Activated CD4-positive, alpha-beta T cell treated with anti-CD3 and anti-CD28 coated beads for 36 hours (primary cell): ENCODE measurements at regions of chr7 and their contacts with region 1.

Region 1: DNA sequence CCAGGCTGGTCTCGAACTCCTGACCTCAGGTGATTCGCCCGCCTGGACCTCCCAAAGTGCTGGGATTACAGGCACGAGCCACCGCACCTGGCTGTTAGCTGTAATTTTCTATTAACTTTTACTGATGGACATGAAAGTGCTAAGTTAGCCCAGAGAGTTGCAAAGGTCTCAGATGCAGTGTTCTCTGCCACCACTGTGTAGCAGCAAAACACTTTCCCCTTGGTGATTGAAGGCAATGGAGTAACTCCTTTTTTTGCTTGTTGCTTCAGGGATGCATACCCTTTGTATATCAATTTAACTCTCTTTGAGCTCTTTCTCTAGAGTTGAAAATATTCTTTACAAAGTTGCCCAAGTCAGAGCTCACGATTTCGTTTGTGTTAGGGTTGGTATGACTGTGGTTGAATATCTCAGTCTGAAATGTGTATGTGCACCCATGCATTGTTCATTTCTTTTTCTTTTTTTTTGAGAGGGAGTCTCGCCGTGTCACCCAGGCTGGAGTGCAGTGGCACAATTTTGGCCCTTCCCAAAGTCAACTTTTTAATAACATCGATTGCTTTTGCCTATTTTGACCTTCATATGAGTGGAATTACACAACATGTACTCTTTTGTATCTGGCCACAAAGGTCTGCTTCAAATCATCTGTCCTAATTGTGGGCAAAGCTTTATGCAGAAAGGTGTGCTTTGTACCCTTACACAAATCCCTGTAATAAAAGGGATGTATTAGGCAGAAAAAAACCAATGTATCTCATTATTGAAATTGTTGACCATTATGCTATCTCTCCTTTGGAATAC is 52.6 kb downstream of the GTF2I start:
- DNase-seq: no peak
- ATAC-seq: no peak
- H3K4me3 Mint-ChIP-seq: no peak overlapping the region
- H3K27ac Mint-ChIP-seq: no peak overlapping the region
- H3K4me1 Mint-ChIP-seq: peaks cover 2% of the 10 kb centered on the region
- H3K27me3 Mint-ChIP-seq: no peaks in the 10 kb centered on the region

Region 2: DNA sequence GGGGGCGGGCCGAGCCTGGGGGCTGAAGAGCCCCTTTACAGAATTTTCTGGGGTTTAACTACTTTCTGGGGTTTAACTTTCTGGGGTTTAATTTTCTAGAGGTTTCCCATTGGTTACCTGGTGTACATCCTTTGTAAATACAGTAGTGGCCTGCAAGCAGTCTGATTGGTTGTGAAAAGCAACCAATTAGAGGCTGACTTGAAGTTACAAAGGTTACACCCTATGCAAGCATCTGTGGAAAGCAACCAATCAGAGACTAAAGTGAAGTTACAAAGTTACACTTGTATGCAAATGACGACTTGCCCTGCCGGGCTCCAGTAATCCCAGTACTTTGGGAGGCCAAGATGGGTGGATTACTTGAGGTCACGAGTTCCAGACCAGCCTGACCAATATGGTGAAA is 25.2 kb before region 1 on chr7:
- CTCF ChIA-PET with region 1: no interaction called
- POLR2A ChIA-PET with region 1: no interaction called
- intact Hi-C with region 1: loop called in 1 of 2 experiments (anchors 2 kb)
- DNase-seq: no peak
- ATAC-seq: no peak
- H3K4me3 Mint-ChIP-seq: no peak overlapping the region
- H3K27ac Mint-ChIP-seq: no peak overlapping the region
- H3K4me1 Mint-ChIP-seq: peaks cover 27% of the 10 kb centered on the region
- H3K27me3 Mint-ChIP-seq: no peaks in the 10 kb centered on the region

Region 3: GRCh38 chr7:76086070-76086469 is 1376.0 kb after region 1 on chr7:
- CTCF ChIA-PET with region 1: no interaction called
- POLR2A ChIA-PET with region 1: no interaction called
- intact Hi-C with region 1: no loop called
- DNase-seq: no peak
- ATAC-seq: no peak
- H3K4me3 Mint-ChIP-seq: no peak overlapping the region
- H3K27ac Mint-ChIP-seq: no peak overlapping the region
- H3K4me1 Mint-ChIP-seq: no peaks in the 10 kb centered on the region
- H3K27me3 Mint-ChIP-seq: no peaks in the 10 kb centered on the region